Endothelial cell of umbilical vein (primary cell): ENCODE measurements at regions of chr3 and their contacts with region 1.

Region 1: DNA sequence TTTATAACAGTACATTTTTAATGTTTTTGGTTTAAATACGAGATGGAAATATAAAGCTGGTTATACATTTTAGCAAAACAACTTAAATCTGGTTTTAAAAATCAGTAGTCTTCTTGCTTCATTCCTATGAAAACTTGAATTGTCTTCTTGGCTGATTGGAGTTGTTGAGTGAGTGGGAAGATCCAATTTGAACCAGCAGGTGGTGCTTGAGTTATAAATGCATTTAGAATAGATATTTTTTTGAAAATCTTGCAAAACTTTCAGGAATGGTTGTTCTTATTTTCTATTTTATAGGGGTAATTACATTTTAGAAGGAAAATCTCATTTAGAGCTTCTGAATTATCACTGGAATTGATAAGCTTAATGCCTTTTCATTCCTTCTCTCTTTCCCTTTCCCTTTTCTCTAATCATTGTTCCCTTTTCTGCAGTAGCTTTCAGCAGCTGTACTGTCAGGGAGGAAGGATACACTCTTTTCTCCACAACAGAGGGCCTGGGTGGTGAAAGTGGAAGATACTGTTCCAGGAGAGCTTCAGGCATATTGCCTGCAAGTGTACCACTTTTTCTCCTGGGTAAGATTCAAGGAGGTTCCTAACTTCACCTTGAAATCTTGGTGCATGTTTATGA is 335.6 kb downstream of the NLGN1 start:
- DNase-seq: peak; percentile 72
- H3K4me3 ChIP-seq: no peak overlapping the region
- H3K27ac ChIP-seq: no peak overlapping the region
- H3K4me1 ChIP-seq: peaks cover 20% of the 10 kb centered on the region
- H3K27me3 ChIP-seq: no peaks in the 10 kb centered on the region
- CTCF ChIP-seq: peak; percentile 23 to 44
- POLR2A ChIP-seq: no peak

Region 2: DNA sequence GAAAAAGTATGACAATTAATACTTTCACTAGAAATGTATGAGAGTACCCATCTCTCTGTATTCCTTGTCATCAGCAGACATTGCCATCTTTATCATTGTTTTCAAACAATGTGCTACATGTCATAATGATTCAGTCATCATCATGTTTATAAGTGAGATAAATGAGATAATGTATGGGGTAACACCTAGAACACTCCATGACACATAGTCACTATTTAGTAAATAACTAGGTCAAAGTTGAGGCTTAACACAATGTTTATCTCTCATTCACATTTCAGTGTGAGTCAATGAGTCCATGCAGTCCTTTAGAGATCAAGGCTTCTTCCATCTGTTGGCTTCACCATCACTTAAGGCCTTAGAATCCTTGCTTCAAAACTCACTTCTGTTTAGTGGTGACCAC is 265.6 kb before region 1 on chr3:
- CTCF ChIA-PET with region 1: no interaction called
- POLR2A ChIA-PET with region 1: no interaction called
- dilution Hi-C with region 1: no loop called
- intact Hi-C with region 1: no loop called
- DNase-seq: peak; percentile 7
- H3K4me3 ChIP-seq: no peak overlapping the region
- H3K27ac ChIP-seq: no peak overlapping the region
- H3K4me1 ChIP-seq: peaks cover 27% of the 10 kb centered on the region
- H3K27me3 ChIP-seq: no peaks in the 10 kb centered on the region
- CTCF ChIP-seq: no peak
- POLR2A ChIP-seq: no peak

Region 3: GRCh38 chr3:173865900-173866496 is 132.9 kb after region 1 on chr3:
- CTCF ChIA-PET with region 1: no interaction called
- POLR2A ChIA-PET with region 1: no interaction called
- dilution Hi-C with region 1: no loop called
- intact Hi-C with region 1: no loop called
- DNase-seq: no peak
- H3K4me3 ChIP-seq: no peak overlapping the region
- H3K27ac ChIP-seq: no peak overlapping the region
- H3K4me1 ChIP-seq: no peaks in the 10 kb centered on the region
- H3K27me3 ChIP-seq: no peaks in the 10 kb centered on the region
- CTCF ChIP-seq: no peak
- POLR2A ChIP-seq: no peak

Region 4: DNA sequence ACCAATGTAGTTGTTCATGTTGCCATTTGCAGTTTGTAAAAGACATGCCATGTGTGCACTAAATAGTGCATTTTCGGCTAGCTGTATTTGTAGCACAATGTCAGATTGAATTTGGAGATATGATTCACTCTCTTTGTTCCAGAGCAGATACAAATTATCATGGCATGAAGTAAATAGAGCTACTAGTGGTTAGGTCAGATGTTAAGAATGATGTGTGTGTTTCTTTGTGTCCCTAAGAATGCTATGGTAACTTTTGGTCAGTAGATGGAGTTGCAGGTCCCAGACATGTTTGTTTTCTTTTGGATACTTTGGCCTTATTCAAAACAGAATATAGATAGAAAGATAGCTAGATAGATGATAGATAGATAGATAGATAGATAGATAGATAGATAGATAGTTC is 260.2 kb after region 1 on chr3:
- CTCF ChIA-PET with region 1: interaction called, 8 read pairs
- POLR2A ChIA-PET with region 1: no interaction called
- dilution Hi-C with region 1: no loop called
- intact Hi-C with region 1: loop called (anchors 2 kb)
- DNase-seq: peak; percentile 74
- H3K4me3 ChIP-seq: no peak overlapping the region
- H3K27ac ChIP-seq: no peak overlapping the region
- H3K4me1 ChIP-seq: no peaks in the 10 kb centered on the region
- H3K27me3 ChIP-seq: no peaks in the 10 kb centered on the region
- CTCF ChIP-seq: peak; percentile 9 to 28
- POLR2A ChIP-seq: no peak

Region 5: GRCh38 chr3:174002543-174002942 is 269.4 kb after region 1 on chr3:
- CTCF ChIA-PET with region 1: interaction called, 6 read pairs
- POLR2A ChIA-PET with region 1: no interaction called
- dilution Hi-C with region 1: no loop called
- intact Hi-C with region 1: loop called (anchors 2 kb)
- DNase-seq: peak; percentile 26
- H3K4me3 ChIP-seq: no peak overlapping the region
- H3K27ac ChIP-seq: no peak overlapping the region
- H3K4me1 ChIP-seq: no peaks in the 10 kb centered on the region
- H3K27me3 ChIP-seq: no peaks in the 10 kb centered on the region
- CTCF ChIP-seq: peak; percentile 11 to 29
- POLR2A ChIP-seq: no peak

Region 6: DNA sequence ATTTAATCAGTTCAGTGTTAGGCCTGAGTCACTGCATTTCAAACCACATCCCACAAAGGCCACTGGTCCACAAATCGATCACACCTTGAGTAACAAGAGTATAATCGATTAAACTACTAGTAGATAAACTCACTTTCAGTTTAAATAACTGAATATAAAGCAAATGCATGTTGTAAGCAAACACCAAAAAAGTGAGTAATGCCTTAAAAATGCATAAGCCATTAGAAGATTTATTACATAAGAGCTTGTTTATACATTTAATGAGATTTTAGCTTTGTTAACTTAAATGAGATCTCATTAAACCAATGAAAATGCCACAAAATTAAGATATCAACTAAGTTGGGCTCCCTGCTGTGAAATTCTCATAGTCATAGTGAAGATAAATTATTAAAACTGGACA is 365.5 kb after region 1 on chr3:
- CTCF ChIA-PET with region 1: no interaction called
- POLR2A ChIA-PET with region 1: no interaction called
- dilution Hi-C with region 1: no loop called
- intact Hi-C with region 1: loop called (anchors 5 kb)
- DNase-seq: no peak
- H3K4me3 ChIP-seq: no peak overlapping the region
- H3K27ac ChIP-seq: no peak overlapping the region
- H3K4me1 ChIP-seq: no peaks in the 10 kb centered on the region
- H3K27me3 ChIP-seq: no peaks in the 10 kb centered on the region
- CTCF ChIP-seq: no peak
- POLR2A ChIP-seq: no peak